K562 (cell line): ENCODE measurements at regions of chr2 and their contacts with region 1.

Region 1: DNA sequence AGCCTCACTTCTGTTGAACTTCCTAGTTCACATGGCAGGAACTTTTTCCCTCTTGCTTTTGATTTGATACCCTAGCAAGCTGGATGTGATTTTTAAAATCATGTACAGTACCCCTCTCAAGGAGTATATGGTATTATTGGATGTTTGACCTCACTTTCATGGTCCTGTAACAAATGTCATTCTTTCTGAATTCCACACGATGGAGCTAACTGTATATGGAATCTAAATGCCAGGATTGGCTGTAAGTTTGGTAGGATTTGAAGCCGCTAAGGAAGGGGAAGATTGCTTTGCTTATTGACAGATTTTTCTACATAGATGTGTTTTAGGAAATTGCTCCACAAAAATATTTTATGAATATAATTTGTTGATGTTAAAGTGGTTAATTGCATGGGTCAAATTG is 18.3 kb downstream of the MAIP1 start:
- DNase-seq: peak in 2 of 4 experiments; percentile 21 to 26
- ATAC-seq: peak; percentile 72
- H3K4me3 ChIP-seq: no peak overlapping the region
- H3K27ac ChIP-seq: no peak overlapping the region
- H3K4me1 ChIP-seq: no peaks in the 10 kb centered on the region
- H3K27me3 ChIP-seq: no peaks in the 10 kb centered on the region
- CTCF ChIP-seq: peak; percentile 32 to 56 (median 39); a peak in 4 of 6 replicates
- EP300 ChIP-seq: no peak
- POLR2A ChIP-seq: no peak
- RAD21 ChIP-seq: peak; percentile 72 to 78

Region 2: DNA sequence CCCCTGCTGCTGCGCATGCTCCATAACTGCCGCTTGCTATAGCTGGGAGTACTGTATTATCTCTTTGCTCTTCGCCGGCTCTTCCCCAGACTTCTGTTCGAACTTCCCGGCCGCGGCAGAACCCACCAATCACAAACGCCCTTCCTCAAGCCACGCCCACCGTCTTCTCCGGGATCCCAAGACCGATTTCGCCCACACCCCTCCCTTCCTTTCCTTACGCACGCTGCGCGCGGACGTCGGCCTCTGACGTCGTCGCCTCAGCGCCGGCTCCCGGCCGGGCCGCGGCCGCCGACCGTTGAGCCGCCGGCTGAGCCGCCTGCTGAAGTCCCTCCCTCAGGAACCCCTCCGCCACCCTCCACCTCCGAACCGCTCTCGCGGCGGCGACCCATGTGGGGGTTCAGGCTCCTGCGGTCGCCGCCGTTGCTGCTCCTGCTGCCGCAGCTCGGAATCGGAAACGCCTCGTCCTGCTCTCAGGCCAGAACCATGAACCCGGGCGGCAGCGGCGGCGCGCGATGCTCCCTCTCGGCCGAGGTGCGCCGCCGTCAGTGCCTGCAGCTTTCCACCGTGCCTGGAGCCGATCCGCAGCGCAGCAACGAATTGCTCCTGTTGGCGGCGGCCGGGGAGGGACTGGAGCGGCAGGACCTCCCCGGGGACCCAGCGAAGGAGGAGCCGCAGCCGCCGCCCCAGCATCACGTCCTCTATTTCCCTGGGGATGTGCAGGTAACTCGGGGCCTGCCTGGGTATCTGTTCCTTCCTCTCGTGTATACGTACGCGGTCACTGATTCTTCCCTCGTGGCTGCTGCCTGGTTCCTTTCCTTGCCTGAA is 62.4 kb before region 1 on chr2 and contains the start of gene C2orf69:
- CTCF ChIA-PET with region 1: no interaction called
- POLR2A ChIA-PET with region 1: no interaction called
- in situ Hi-C with region 1: no loop called
- intact Hi-C with region 1: no loop called
- DNase-seq: peak; percentile 87 to 97 (median 91)
- ATAC-seq: peak; percentile 93
- H3K4me3 ChIP-seq: peak within 1 kb of the TSS; percentile 90
- H3K27ac ChIP-seq: peak within 1 kb of the TSS; percentile 95
- H3K4me1 ChIP-seq: peaks cover 3 to 10% of the 10 kb centered on the region in 2 experiments; a peak in 3 of 5 replicates
- H3K27me3 ChIP-seq: no peaks in the 10 kb centered on the region
- CTCF ChIP-seq: no peak
- EP300 ChIP-seq: peak; percentile 18; the same call in 1 of the 2 replicates
- POLR2A ChIP-seq: peak; percentile 89
- RAD21 ChIP-seq: no peak
- polyA plus RNA-seq, gene C2orf69: 3.4 to 4.3 TPM

Region 3: DNA sequence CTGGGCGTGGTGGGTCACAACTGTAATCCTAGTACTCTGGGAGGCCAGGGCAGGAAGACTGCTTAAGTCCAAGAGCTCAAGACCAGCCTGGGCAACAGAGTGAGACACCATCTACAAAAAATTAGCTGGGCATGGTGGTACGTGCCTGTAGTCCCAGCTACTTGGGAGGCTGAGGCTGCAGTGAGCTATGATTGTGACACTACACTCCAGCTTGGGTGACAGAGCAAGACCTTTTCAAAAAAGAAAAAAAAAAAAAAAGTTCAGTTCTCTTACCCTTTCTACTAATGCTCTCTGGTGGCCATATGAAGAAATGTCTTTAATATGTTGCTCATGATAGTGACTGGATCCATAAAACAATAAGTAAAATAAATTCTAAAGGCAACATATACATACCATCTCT is 33.3 kb before region 1 on chr2:
- CTCF ChIA-PET with region 1: no interaction called
- POLR2A ChIA-PET with region 1: no interaction called
- in situ Hi-C with region 1: no loop called
- intact Hi-C with region 1: no loop called
- DNase-seq: no peak
- ATAC-seq: peak; percentile 76
- H3K4me3 ChIP-seq: no peak overlapping the region
- H3K27ac ChIP-seq: no peak overlapping the region
- H3K4me1 ChIP-seq: no peaks in the 10 kb centered on the region
- H3K27me3 ChIP-seq: no peaks in the 10 kb centered on the region
- CTCF ChIP-seq: peak in 1 of 3 experiments; percentile 44; a peak in 2 of 6 replicates
- EP300 ChIP-seq: no peak
- POLR2A ChIP-seq: no peak
- RAD21 ChIP-seq: peak; percentile 18 to 52; a peak in 2 of 4 replicates

Region 4: GRCh38 chr2:200471324-200471848 is 497.7 kb after region 1 on chr2:
- CTCF ChIA-PET with region 1: interaction called, 3 read pairs
- POLR2A ChIA-PET with region 1: interaction called, 3 read pairs
- in situ Hi-C with region 1: loop called (anchors 5 kb)
- intact Hi-C with region 1: no loop called
- DNase-seq: peak in 2 of 4 experiments; percentile 39
- ATAC-seq: peak; percentile 74
- H3K4me3 ChIP-seq: no peak overlapping the region
- H3K27ac ChIP-seq: no peak overlapping the region
- H3K4me1 ChIP-seq: no peaks in the 10 kb centered on the region
- H3K27me3 ChIP-seq: no peaks in the 10 kb centered on the region
- CTCF ChIP-seq: peak; percentile 35 to 66 (median 60)
- EP300 ChIP-seq: no peak
- POLR2A ChIP-seq: no peak
- RAD21 ChIP-seq: peak; percentile 68 to 75